ENCODE measurements at regions of chr5 and their contacts with region 1.

Region 1: GRCh38 chr5:132829742-132830435 is 558 bp downstream of the SHROOM1 start:
- DNase-seq: no peak
- H3K4me3 ChIP-seq: peak overlapping the region; percentile 59 to 91 (median 89)
- H3K27ac ChIP-seq: peak overlapping the region; percentile 72 to 89 (median 84)
- H3K4me1 ChIP-seq: peaks cover 10 to 45% (median 12%) of the 10 kb centered on the region in 3 donors
- H3K27me3 ChIP-seq: peaks cover 0 to 40% (median 0%) of the 10 kb centered on the region in 4 donors
- CTCF ChIP-seq: peak; percentile 82 to 92 (median 90)
- POLR2A ChIP-seq: peak in 1 of 4 donors; percentile 11

Region 2: GRCh38 chr5:132612846-132613245 is 217.0 kb before region 1 on chr5:
- intact Hi-C with region 1: no loop called
- DNase-seq: no peak
- H3K4me3 ChIP-seq: no peak overlapping the region
- H3K27ac ChIP-seq: no peak overlapping the region
- H3K4me1 ChIP-seq: no peaks in the 10 kb centered on the region
- H3K27me3 ChIP-seq: no peaks in the 10 kb centered on the region
- CTCF ChIP-seq: no peak
- POLR2A ChIP-seq: no peak

Region 3: GRCh38 chr5:132873119-132873929 is 43.4 kb after region 1 on chr5 and contains the start of gene LEAP2:
- intact Hi-C with region 1: loop called (anchors 5 kb)
- DNase-seq: no peak
- H3K4me3 ChIP-seq: no peak within 1 kb of the TSS
- H3K27ac ChIP-seq: no peak within 1 kb of the TSS
- H3K4me1 ChIP-seq: peaks cover 0 to 13% (median 0%) of the 10 kb centered on the region in 3 donors
- H3K27me3 ChIP-seq: no peaks in the 10 kb centered on the region
- CTCF ChIP-seq: no peak
- POLR2A ChIP-seq: no peak
- total RNA-seq, gene LEAP2: 0.29 to 2.3 (median 0.92) TPM

Measured in esophagus squamous epithelium (tissue), 5 donors.